ENCODE measurements at regions of chr10 and their contacts with region 1.

Region 1: DNA sequence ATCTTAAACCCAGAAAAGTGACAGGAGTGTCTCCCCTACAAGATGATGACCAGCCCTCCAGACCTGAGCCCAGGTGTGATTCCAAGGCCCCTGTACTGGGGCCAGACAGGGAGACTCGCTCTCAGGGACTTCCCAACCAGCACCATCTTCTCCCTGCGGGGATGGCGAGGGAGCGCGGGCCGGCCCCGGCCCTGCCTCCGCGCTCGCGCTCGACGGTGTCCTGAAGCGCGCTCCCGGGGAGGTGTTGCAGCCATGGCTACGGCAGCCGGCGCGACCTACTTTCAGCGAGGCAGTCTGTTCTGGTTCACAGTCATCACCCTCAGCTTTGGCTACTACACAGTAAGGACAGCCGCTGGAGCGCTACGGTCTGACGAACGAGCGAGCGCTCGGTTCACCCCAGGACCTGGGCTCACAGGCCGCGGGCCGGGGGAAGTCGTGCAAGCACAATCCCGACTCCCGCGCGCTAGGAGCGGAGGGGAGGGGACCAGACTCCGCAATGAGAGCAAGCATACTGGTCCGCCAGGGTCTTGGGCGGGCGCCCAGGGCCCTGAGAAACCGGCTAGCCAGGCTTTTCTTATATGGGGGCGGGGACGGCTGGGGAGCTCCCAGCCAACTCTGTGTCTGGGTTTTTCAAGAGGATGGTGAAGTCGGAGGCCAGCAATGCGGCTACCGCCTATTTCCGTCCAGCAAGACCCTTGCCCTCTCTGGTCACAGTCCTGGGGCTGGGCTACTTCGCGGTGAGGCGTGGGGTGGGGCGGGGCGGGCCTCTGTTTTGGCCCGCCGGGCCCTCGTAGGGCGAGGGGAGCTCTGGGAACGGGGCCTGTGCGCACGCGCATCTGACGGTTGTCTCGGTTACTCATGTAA is at the start of gene TMEM254:
- DNase-seq: peak; percentile 88
- H3K4me3 ChIP-seq: peak within 1 kb of the TSS; percentile 46 to 94 (median 79)
- H3K27ac ChIP-seq: peak within 1 kb of the TSS; percentile 48
- H3K4me1 ChIP-seq: peaks cover 8% of the 10 kb centered on the region
- H3K27me3 ChIP-seq: no peaks in the 10 kb centered on the region
- CTCF ChIP-seq: no peak
- POLR2A ChIP-seq: no peak
- total RNA-seq, gene TMEM254: 6.0 and 10.1 TPM in 2 replicates

Region 2: GRCh38 chr10:80046629-80047441 is 31.8 kb before region 1 on chr10:
- CTCF ChIA-PET with region 1: interaction called, 10 read pairs
- POLR2A ChIA-PET with region 1: no interaction called
- dilution Hi-C with region 1: no loop called
- intact Hi-C with region 1: no loop called
- DNase-seq: peak; percentile 70
- H3K4me3 ChIP-seq: no peak overlapping the region
- H3K27ac ChIP-seq: no peak overlapping the region
- H3K4me1 ChIP-seq: no peaks in the 10 kb centered on the region
- H3K27me3 ChIP-seq: peaks cover 7 to 12% of the 10 kb centered on the region in 2 experiments
- CTCF ChIP-seq: peak; percentile 89 to 92
- POLR2A ChIP-seq: no peak

Region 3: DNA sequence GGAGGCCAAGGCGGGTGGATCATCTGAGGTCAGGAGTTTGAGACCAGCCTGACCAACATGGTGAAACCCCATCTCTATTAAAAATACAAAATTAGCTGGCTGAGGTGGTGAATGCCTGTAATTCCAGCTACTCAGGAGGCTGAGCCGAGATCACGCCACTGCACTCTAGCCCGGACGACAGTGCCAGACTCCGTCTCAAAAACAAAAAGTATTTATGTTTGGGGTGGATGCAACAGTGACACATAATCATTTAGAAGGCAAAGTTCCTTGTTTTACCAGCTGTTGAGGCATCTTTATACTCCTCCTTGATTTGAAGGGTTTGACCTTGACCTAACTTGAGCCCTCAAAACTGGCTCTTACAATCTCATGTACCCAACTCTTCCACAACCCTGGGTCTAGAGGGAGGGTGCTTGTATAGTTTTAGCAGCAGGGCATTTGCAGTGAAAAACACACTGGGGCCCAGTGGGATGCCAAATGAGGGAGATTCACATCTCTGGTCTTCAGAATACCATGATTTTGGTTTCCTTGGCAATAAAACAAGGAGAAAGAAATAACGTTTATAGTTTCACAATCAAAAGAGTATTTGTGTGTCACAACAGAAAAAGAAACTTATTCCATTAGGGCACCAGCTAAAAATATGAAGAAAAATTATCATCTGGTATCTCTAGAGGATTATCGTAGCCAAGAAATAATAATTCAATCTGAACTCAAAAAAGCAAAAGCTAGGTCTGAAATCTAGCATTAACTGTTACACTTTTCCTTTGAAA is 14.4 kb before region 1 on chr10:
- CTCF ChIA-PET with region 1: interaction called, 17 read pairs
- POLR2A ChIA-PET with region 1: interaction called, 3 read pairs
- dilution Hi-C with region 1: no loop called
- intact Hi-C with region 1: no loop called
- DNase-seq: no peak
- H3K4me3 ChIP-seq: no peak overlapping the region
- H3K27ac ChIP-seq: no peak overlapping the region
- H3K4me1 ChIP-seq: no peaks in the 10 kb centered on the region
- H3K27me3 ChIP-seq: no peaks in the 10 kb centered on the region
- CTCF ChIP-seq: no peak
- POLR2A ChIP-seq: no peak

Region 4: DNA sequence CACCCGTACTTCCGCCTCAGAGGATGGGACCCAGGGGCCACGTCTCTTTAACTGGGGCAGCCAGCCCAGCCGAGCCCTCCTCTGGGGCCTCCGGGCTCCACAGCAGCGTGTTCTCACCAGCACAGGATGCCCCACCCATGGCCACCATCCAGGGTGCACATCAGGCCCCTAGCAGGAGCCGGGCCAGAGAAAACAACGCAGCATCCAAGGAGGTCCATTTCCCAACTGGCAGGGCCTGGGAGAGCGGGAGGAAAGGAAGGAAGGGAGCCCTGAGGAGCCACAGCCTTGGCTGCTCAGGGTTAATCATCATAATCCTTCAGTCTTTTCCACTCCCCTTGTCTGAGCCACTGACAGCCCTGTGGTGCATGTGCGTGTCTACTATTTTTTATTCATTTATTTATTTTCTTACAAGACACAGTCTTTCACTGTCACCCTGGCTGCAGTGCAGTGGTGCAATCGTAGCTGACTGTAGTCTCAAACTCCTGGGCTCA is 57.4 kb after region 1 on chr10:
- CTCF ChIA-PET with region 1: no interaction called
- POLR2A ChIA-PET with region 1: no interaction called
- dilution Hi-C with region 1: no loop called
- intact Hi-C with region 1: loop called (anchors 2 kb)
- DNase-seq: peak; percentile 83
- H3K4me3 ChIP-seq: no peak overlapping the region
- H3K27ac ChIP-seq: no peak overlapping the region
- H3K4me1 ChIP-seq: peaks cover 10% of the 10 kb centered on the region
- H3K27me3 ChIP-seq: peaks cover 0 to 2% of the 10 kb centered on the region in 2 experiments
- CTCF ChIP-seq: no peak
- POLR2A ChIP-seq: no peak

Region 5: DNA sequence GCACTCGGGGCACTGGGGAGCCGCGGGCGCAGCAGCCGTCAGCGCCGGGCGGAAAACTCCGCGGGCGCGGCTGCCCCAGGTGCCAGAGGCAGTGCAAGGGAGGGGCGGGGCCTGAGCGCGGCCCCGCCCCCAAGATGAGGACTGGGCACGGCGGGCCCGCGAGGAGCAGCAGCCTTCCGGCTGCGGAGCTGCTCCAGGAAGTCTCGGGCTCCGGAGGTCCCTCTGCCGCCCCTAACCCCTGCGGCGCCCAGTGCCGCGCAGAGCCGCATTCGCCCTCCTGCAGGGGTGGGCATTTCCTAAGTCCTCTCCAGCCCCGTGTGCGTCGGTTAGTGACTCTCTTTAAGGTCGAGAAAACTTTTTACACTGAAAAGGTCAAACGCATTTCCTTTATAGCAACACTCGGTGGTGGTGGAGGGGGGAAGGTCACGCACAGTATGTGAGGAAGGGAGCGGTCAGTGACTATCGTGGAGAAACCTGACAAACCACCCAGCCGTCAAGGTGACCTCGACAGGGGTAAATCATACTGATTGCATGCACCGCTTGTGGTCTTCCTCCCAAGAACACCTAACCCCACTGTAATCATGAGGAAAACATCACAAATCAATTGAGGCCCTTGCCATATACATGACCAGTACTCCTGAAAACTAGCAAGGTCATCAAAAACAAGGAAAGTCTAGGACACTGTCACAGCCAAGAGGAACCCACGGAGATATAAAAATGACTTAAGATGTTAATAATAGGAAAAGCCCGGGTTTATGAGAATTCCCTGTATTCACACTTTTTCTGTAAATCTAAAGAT is 127.0 kb after region 1 on chr10 and contains the start of gene ANXA11:
- CTCF ChIA-PET with region 1: interaction called, 3 read pairs
- POLR2A ChIA-PET with region 1: no interaction called
- dilution Hi-C with region 1: no loop called
- intact Hi-C with region 1: loop called (anchors 5 kb)
- DNase-seq: peak; percentile 62
- H3K4me3 ChIP-seq: peak within 1 kb of the TSS; percentile 16 to 71 (median 50)
- H3K27ac ChIP-seq: peak within 1 kb of the TSS; percentile 87
- H3K4me1 ChIP-seq: peaks cover 38% of the 10 kb centered on the region
- H3K27me3 ChIP-seq: no peaks in the 10 kb centered on the region
- CTCF ChIP-seq: no peak
- POLR2A ChIP-seq: peak; percentile 62
- total RNA-seq, gene ANXA11: 122 and 143 TPM in 2 replicates

Measured in endothelial cell of umbilical vein (primary cell).